ENCODE measurements at regions of chr4 and their contacts with region 1.

Region 1: GRCh38 chr4:173211838-173212237 is 43.2 kb downstream of the GALNT7 start:
- DNase-seq: peak; percentile 80
- ATAC-seq: peak; percentile 91
- H3K4me3 ChIP-seq: no peak overlapping the region
- H3K27ac ChIP-seq: peak overlapping the region; percentile 79
- H3K4me1 ChIP-seq: peaks cover 48% of the 10 kb centered on the region
- H3K27me3 ChIP-seq: no peaks in the 10 kb centered on the region
- CTCF ChIP-seq: no peak

Region 2: DNA sequence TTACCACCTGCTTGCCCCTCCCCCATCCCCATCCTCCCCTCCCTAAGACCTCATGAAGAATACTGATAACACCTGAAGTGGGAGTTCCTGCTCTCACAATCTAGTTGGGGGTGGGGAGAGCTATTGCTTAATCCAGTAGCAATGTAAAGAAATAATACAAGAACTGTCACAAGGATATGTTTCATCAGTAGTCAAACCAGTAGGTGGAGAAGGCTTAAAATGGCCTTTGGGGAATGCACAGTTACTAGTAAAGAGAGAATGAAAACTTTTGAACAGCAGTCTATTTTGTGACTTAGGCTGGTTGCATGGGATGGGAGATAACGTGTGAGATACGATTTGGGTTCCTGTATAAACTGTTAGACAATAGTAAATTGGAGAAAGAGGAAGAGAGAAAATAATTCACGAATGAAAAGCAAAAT is 37.2 kb before region 1 on chr4:
- CTCF ChIA-PET with region 1: no interaction called
- POLR2A ChIA-PET with region 1: no interaction called
- intact Hi-C with region 1: loop called (anchors 5 kb)
- DNase-seq: peak; percentile 10
- ATAC-seq: no peak
- H3K4me3 ChIP-seq: no peak overlapping the region
- H3K27ac ChIP-seq: no peak overlapping the region
- H3K4me1 ChIP-seq: peaks cover 39% of the 10 kb centered on the region
- H3K27me3 ChIP-seq: no peaks in the 10 kb centered on the region
- CTCF ChIP-seq: no peak

Region 3: GRCh38 chr4:173191623-173192041 is 20.2 kb before region 1 on chr4:
- CTCF ChIA-PET with region 1: no interaction called
- POLR2A ChIA-PET with region 1: no interaction called
- intact Hi-C with region 1: loop called (anchors 2 kb)
- DNase-seq: peak; percentile 90
- ATAC-seq: peak; percentile 90
- H3K4me3 ChIP-seq: peak overlapping the region; percentile 33
- H3K27ac ChIP-seq: peak overlapping the region; percentile 99
- H3K4me1 ChIP-seq: peaks cover 32% of the 10 kb centered on the region
- H3K27me3 ChIP-seq: no peaks in the 10 kb centered on the region
- CTCF ChIP-seq: no peak